Activated T-helper 1 cell treated with anti-CD3 and anti-CD28 coated beads, Interleukin-12 subunit alpha, Interleukin-12 subunit beta, Interleukin-2, Interleukin-4 antibody, amounts not matched to agents 30 ng/mL and 10 ng/mL and 1 ng/mL, durations not matched to agents 14 hours and 24 hours and 36 hours (primary cell): ENCODE measurements at regions of chr18 and their contacts with region 1.

Region 1: DNA sequence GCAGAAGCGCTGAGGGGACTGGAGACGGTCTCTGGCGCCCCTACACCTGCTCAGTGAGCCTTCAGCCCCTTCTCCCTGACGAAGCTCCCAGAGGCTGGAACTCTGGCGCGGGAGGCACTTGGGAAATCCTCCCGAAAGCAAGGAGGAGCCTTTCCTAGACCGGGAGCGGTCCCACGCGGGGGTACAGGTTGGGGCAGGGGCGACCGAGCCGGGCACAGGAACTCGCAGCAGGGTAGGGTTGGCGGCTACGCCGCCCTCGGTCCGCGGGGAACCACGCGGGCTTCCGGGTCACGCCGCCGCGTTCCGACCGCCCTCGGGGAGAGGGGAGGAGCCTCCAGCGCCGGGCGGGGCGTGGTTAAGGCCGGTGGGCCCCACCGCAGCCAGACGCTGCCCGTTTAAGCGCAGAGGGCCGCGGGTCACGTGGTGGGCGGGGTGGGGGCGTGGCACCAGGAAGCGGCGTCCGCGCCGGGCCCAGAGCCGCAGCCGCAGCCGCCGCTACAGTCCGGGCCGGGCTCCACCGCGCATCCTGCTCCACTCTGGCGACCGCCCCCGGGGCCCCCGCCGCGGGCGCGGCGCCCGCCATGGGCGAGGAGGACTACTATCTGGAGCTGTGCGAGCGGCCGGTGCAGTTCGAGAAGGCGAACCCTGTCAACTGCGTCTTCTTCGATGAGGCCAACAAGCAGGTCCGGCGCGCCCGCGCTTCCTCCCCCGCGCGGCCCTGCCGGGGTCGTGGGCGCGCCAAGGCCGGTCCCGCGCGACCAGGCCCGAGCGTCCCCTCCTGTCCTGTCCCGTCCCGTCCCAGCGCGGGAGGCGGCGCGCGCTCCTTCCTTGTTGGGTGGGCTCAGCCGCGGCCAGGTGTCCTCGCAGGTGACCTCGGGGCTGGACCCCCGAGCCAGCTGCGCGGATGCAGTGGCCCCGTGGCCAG is at the start of gene RMC1:
- DNase-seq: peak; percentile 96
- H3K4me3 Mint-ChIP-seq: peak within 1 kb of the TSS; percentile 97
- H3K27ac Mint-ChIP-seq: peak within 1 kb of the TSS; percentile 91
- H3K4me1 Mint-ChIP-seq: peaks cover 66% of the 10 kb centered on the region
- H3K27me3 Mint-ChIP-seq: no peaks in the 10 kb centered on the region
- total RNA-seq, gene RMC1: 56.3 and 56.7 TPM in 2 replicates

Region 2: GRCh38 chr18:23452728-23453679 is 50.3 kb before region 1 on chr18 and contains the start of gene RIOK3:
- intact Hi-C with region 1: loop called (anchors 1 kb)
- DNase-seq: peak; percentile 94
- H3K4me3 Mint-ChIP-seq: peak within 1 kb of the TSS; percentile 97
- H3K27ac Mint-ChIP-seq: peak within 1 kb of the TSS; percentile 92
- H3K4me1 Mint-ChIP-seq: peaks cover 39% of the 10 kb centered on the region
- H3K27me3 Mint-ChIP-seq: no peaks in the 10 kb centered on the region
- total RNA-seq, gene RIOK3: 40.8 and 52.2 TPM in 2 replicates

Region 3: DNA sequence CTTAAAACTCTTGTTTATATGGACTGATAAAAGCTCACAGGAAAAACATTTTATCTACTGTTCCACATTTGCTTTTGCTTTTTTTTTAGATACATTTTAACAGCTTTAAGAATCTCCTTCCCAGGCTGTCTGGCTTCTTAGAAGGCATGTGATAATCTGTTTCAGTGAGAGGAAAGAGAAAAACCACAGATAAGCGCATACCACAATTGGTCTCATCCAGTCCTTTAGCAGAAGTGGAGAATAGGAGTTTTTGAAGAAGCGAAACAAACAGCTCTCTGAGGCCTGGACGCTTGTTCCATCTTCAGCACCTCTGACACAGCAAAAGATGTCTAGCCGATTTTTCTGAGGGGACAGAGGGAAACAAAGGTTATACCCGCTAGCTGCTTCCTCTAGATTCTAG is 37.6 kb after region 1 on chr18:
- intact Hi-C with region 1: loop called (anchors 1 kb)
- DNase-seq: peak; percentile 26
- H3K4me3 Mint-ChIP-seq: peak overlapping the region; percentile 43
- H3K27ac Mint-ChIP-seq: peak overlapping the region; percentile 71
- H3K4me1 Mint-ChIP-seq: peaks cover 39% of the 10 kb centered on the region
- H3K27me3 Mint-ChIP-seq: no peaks in the 10 kb centered on the region

Region 4: DNA sequence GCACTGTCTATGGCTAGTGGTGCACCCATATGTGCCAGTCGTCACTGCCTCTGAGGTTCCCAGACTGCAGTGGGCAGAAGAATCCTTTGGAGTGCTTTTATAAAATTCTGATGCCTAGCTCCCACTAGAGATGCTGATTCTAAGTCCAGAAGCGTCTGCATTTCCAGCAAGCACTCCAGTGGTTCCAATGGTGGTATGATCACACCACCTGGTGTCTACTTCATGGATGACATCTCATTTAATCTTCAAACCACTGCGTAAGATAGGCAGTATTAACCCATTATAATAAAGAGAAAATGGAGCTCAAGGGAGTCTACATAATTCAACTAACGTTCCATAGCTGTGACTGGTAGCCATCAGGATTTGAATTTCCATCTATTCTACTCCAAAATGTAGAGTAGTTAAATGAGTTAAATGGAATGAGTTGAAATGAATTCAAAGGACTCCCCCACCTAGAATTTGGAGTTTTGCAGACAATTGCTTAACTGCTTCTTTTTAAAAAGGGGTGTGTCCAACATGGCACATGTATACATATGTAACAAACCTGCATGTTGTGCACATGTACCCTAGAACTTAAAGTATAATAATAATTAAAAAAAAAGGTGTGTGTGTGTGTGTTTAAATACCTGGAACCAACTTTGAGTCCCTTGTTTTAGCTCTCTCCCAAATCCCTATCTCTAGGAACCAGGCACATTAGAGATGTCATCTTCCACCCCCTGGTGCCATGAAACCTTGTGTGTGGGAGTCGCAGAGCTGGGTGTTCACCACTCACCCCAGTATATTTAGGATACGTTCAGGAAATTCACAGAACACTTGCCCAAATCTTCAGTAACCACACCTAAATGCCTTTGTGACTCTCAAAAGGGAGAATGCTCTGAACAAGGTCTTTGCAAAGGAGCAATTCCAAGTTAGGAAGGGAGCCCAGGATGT is 200.0 kb after region 1 on chr18:
- intact Hi-C with region 1: loop called (anchors 2 kb)
- DNase-seq: no peak
- H3K4me3 Mint-ChIP-seq: no peak overlapping the region
- H3K27ac Mint-ChIP-seq: no peak overlapping the region
- H3K4me1 Mint-ChIP-seq: no peaks in the 10 kb centered on the region
- H3K27me3 Mint-ChIP-seq: peaks cover 31% of the 10 kb centered on the region

Region 5: DNA sequence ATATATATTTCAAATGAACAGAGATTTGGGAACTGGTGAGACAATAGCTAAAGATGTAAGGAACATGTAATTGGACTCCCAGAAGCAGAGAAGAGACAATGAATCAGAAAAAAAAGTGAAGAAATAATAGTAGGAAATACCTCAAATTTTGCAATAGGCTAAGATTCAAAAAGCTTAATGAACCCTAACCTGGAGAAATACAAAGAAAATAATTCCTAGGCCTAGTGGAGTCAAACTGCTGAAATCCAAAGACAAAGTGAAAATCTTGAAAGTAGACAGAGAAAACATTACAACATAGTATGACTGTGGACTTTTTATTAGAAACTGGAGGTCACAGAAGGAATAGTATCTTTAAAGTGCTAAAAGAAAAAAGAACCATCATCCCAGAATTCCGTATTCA is 262.6 kb after region 1 on chr18:
- intact Hi-C with region 1: no loop called
- DNase-seq: no peak
- H3K4me3 Mint-ChIP-seq: no peak overlapping the region
- H3K27ac Mint-ChIP-seq: no peak overlapping the region
- H3K4me1 Mint-ChIP-seq: no peaks in the 10 kb centered on the region
- H3K27me3 Mint-ChIP-seq: peaks cover 15% of the 10 kb centered on the region

Region 6: DNA sequence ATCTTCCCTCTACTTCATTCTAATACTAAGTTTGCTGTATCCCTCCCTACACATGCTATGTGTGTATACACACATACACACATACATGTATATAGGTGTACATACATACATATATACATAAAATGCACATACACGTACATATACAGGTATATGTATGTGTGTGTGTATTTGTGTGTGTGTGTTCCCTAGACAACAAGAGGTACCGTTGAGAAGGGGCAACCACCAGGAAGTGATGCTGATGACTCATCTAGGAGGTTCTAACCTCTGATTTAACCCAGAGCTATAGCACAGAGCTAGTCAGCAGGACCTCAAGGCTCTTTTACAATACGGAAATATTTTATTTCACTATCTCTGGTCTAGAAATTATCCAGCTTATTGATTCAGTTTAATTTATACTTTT is 325.1 kb after region 1 on chr18:
- intact Hi-C with region 1: loop called (anchors 5 kb)
- DNase-seq: peak; percentile 49
- H3K4me3 Mint-ChIP-seq: no peak overlapping the region
- H3K27ac Mint-ChIP-seq: peak overlapping the region; percentile 89
- H3K4me1 Mint-ChIP-seq: peaks cover 52% of the 10 kb centered on the region
- H3K27me3 Mint-ChIP-seq: peaks cover 4% of the 10 kb centered on the region